Right ventricle myocardium inferior (tissue), 1 donor: ENCODE measurements at regions of chr22 and their contacts with region 1.

Region 1: DNA sequence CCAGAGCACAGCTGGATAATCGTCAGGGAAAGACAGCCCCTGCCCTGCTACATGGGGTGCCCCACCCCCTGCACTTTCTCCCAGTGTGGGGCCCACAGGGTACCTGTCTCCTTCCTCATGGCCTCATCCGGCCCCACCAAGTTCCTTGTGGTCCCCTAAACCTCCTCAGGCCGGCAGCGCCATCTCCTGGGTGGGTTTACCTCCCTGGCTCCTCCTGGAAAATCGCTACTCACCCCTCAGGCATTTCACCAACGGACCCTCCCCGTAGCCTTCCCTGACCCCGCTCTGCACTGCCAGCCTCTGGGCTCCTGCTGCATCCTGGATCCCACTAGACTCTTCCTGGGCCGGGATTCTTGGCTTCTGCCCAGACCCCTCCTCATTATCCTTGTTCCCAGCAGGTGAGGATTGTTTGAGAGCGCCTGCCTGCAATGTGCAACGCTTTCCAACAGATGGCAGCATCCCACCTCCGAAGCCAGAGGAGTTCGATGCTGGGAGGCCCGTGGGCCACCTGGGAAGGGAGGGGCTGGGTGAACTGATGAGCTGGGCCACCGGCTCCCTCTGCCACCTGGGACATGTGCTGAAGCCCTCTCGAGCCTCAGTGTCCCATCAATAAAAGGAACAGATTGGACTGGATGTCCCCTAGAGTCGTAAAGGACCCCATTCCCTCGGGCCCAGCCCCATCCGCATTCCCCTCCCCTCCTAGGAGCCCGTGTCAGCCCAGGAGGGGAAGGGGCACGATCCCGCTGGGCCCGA is 44.2 kb upstream of the TTLL12 start:
- DNase-seq: no peak
- ATAC-seq: no peak

Region 2: GRCh38 chr22:43273902-43274484 is 42.8 kb after region 1 on chr22:
- intact Hi-C with region 1: loop called (anchors 2 kb)
- DNase-seq: no peak
- ATAC-seq: peak; percentile 56

Region 3: DNA sequence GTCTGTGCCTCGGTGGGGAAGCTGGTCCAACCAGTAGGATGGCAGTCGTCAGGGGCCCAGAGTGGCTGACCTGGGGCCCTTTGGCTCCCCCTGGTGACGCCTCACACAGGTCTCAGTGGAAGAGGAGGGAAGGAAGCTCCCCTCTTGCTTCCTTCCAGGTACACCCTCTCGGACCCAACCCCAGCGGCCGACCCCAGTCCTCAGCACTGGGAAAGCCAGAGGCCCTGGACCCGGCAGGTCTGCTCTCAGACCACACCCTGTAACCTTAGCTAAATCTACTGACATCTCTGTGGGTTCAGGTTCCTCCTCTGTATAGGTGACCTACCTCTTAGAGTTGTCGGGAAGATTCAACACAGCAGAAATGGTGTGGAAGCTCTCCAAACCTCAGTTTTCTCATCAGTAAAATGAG is 115.4 kb after region 1 on chr22:
- intact Hi-C with region 1: loop called (anchors 1 kb)
- DNase-seq: no peak
- ATAC-seq: peak; percentile 69